ENCODE measurements at regions of chr2 and their contacts with region 1.

Region 1: GRCh38 chr2:198296665-198297308 is 492.4 kb downstream of the PLCL1 start:
- H3K4me3 ChIP-seq: no peak overlapping the region
- H3K27ac ChIP-seq: no peak overlapping the region
- H3K4me1 ChIP-seq: no peaks in the 10 kb centered on the region
- CTCF ChIP-seq: peak; percentile 77

Region 2: DNA sequence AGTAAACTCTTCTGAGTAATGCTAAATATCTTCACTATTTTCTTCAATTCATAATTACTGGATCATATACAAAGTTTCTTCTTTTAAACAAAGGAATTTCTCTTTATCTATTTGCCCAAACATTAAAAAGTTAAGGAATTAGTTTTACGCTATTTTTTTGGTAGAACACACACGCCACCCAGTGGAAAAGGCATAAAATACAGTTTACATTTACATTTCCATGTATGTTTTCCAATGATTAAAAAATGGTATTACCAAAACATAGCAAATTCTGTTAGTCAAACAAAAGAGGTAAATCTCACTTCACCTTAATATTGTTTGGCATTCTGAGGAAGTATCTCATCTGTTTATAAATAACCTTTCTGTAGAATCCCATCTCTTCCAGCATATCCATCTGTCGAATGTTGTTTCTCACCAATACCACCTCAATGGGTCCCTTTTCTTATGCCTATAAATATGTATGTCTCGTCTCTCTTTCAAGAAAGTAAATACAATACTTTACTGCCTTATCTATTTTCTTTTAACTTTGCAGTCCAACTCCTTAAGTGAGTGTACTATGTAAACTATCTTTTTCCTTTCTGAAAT is 518.9 kb before region 1 on chr2:
- CTCF ChIA-PET with region 1: interaction called, 11 read pairs
- POLR2A ChIA-PET with region 1: no interaction called
- H3K4me3 ChIP-seq: no peak overlapping the region
- H3K27ac ChIP-seq: no peak overlapping the region
- H3K4me1 ChIP-seq: no peaks in the 10 kb centered on the region
- CTCF ChIP-seq: no peak

Region 3: DNA sequence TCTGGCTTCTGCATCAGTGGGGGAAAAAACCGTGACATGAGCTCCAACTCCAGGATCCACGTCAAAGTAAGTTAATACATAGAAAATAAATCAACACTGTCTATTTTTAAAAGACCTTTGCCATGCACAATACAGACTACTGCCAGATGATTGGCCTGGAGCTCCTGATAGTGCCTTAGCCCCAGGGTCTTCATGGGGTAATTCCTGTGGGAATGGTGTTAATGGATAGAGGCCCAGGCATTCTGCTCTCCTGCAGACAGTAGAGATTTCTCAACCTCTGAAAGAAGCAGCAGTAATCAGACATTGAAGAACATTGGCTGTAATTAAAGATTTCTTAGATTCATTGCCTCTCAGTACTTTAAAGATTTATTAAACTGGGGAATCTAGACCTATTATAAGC is 496.7 kb before region 1 on chr2:
- CTCF ChIA-PET with region 1: interaction called, 20 read pairs
- POLR2A ChIA-PET with region 1: no interaction called
- H3K4me3 ChIP-seq: no peak overlapping the region
- H3K27ac ChIP-seq: no peak overlapping the region
- H3K4me1 ChIP-seq: no peaks in the 10 kb centered on the region
- CTCF ChIP-seq: no peak

Region 4: DNA sequence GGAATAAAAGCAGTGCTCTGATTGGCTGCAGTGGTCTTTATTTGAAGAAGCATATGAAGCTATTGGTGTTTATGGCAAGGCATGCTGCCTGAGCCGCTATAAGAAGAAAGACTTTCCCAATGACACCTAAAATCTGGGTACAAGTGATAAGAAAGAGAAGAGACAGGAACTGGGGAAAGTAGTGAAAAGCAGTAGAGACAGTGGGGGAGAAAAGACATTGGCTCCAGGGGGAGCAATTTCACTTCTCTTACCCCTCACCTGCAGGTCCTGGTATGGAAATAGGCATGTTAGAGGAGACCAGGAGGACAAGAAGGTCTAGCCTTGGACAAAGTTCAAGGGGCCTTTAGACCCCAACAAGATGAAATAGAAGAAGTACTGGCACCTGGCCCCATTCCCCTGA is 445.3 kb before region 1 on chr2:
- CTCF ChIA-PET with region 1: interaction called, 14 read pairs
- POLR2A ChIA-PET with region 1: no interaction called
- H3K4me3 ChIP-seq: no peak overlapping the region
- H3K27ac ChIP-seq: no peak overlapping the region
- H3K4me1 ChIP-seq: no peaks in the 10 kb centered on the region
- CTCF ChIP-seq: peak; percentile 48; the same call in 1 of the 2 replicates

Region 5: DNA sequence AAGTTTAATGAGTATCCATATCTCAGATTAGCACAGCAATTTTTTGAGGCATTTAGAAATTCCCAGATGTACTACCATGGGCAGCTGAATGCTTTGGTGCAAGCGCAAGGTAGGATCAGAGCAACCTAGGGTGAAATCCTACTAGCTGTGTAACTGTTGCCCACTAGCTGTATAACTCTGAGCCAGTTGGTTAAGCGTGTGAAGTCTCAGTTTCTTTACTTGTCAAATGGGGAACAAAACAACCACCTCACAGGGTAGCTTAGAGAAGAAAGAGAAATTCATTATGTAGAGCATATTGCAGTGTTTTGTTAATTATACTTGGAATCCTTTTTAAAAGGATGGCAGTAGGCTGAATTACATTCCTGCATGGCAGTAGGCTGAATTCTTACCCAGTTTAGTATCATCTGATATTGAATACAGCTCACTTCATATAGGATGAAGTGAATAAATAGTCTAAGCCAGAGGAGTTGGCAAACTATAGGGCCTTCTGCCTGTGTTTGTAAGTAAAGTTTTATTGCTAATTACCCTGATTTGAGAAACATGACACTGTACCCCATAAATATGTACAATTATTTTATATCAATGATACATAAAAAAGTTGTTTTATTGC is 311.7 kb before region 1 on chr2:
- CTCF ChIA-PET with region 1: no interaction called
- POLR2A ChIA-PET with region 1: no interaction called
- H3K4me3 ChIP-seq: no peak overlapping the region
- H3K27ac ChIP-seq: no peak overlapping the region
- H3K4me1 ChIP-seq: no peaks in the 10 kb centered on the region
- CTCF ChIP-seq: no peak

Region 6: DNA sequence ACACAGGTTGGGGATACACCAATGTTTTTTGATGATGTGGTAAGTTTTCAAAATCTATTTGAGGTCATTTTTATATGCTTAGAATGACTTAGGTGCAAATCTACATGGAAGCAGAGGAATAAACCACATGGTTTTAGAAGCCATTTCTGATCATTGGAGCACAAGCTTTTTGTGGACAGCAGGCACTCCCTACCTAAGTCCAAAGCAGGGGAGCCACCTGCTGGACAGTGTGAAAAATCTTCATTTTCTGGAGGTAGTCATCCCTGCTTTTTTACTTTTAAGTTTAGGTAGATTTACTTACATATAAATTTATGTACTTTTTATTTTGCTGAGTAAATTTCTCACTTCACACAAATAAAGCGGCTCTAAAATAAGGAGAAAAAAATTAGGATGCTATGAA is 169.2 kb before region 1 on chr2:
- CTCF ChIA-PET with region 1: interaction called, 12 read pairs
- POLR2A ChIA-PET with region 1: no interaction called
- H3K4me3 ChIP-seq: no peak overlapping the region
- H3K27ac ChIP-seq: no peak overlapping the region
- H3K4me1 ChIP-seq: no peaks in the 10 kb centered on the region
- CTCF ChIP-seq: no peak

Region 7: DNA sequence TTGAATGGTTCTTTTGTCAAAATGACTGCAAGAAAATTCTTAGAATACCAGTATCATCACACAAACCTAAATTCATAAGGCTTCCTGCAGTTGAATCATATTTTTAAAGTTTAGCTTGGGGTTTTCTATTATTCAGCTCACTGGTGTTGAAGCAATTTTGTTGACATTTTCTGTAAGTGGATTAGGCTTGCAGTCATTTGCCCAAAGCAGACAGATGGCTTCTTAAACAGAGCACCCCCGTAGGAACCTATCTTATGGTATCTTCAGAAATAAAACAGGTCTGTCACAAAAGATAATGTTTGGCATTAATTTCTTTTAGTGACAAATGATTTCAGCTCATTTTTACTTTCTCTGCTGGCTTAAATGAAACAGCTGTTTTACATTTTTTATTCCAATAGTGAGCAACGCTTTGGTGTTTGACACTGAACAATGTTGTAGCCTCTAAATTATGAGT is 161.3 kb before region 1 on chr2:
- CTCF ChIA-PET with region 1: interaction called, 11 read pairs
- POLR2A ChIA-PET with region 1: no interaction called
- H3K4me3 ChIP-seq: no peak overlapping the region
- H3K27ac ChIP-seq: no peak overlapping the region
- H3K4me1 ChIP-seq: no peaks in the 10 kb centered on the region
- CTCF ChIP-seq: no peak

Region 8: DNA sequence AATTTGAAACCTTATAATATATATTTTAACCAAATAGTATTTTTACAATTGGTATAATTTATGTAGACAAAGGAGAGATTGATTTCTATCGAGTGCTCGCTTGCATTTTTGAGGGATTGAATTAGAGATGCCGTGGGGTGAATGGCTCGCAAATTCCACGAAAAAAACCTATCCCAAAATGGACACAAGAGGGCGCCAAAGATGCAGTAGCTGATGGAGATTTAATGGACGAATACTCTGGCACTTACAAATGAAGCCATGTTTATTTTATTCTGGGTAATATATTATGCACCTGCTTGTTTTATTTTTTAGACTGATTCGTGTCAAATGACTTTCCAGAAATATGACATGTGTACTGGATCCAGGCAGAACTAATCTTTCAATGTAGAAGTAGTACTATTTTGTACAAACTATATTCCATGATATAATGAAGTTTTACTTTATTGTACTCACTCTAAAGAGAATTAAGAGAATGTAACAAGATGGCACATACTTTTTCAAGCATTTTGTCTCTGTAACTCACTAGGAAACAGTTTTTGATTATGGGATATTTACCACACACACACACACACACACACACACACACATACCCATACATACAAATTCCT is 13.0 kb after region 1 on chr2:
- CTCF ChIA-PET with region 1: interaction called, 11 read pairs
- POLR2A ChIA-PET with region 1: no interaction called
- H3K4me3 ChIP-seq: no peak overlapping the region
- H3K27ac ChIP-seq: no peak overlapping the region
- H3K4me1 ChIP-seq: peaks cover 4% of the 10 kb centered on the region; the same call in 1 of the 2 replicates
- CTCF ChIP-seq: peak; percentile 42; the same call in 1 of the 2 replicates

Measured in HEK293 (cell line).